ENCODE measurements at regions of chr6 and their contacts with region 1.

Region 1: GRCh38 chr6:129748212-129748900 is 38.4 kb upstream of the ARHGAP18 start:
- DNase-seq: peak in 8 of 9 donors; percentile 35 to 61 (median 42)
- ATAC-seq: peak; percentile 85
- H3K4me3 ChIP-seq: peak overlapping the region; percentile 43
- H3K4me3 Mint-ChIP-seq: peak overlapping the region; percentile 31 to 86 (median 79)
- H3K27ac ChIP-seq: peak overlapping the region; percentile 69
- H3K27ac Mint-ChIP-seq: peak overlapping the region; percentile 82 to 97 (median 89)
- H3K4me1 ChIP-seq: peaks cover 44 to 49% of the 10 kb centered on the region in 2 donors
- H3K4me1 Mint-ChIP-seq: peaks cover 40 to 81% (median 71%) of the 10 kb centered on the region in 7 donors
- H3K27me3 ChIP-seq: no peaks in the 10 kb centered on the region
- H3K27me3 Mint-ChIP-seq: no peaks in the 10 kb centered on the region

Region 2: GRCh38 chr6:129490521-129491245 is 257.7 kb before region 1 on chr6:
- CTCF ChIA-PET with region 1: no interaction called
- POLR2A ChIA-PET with region 1: no interaction called
- intact Hi-C with region 1: loop called (anchors 2 kb)
- DNase-seq: peak in 8 of 9 donors; percentile 53 to 89 (median 72)
- ATAC-seq: peak; percentile 96
- H3K4me3 ChIP-seq: peak overlapping the region; percentile 38
- H3K4me3 Mint-ChIP-seq: peak overlapping the region; percentile 61 to 90 (median 76)
- H3K27ac ChIP-seq: peak overlapping the region; percentile 73
- H3K27ac Mint-ChIP-seq: peak overlapping the region; percentile 84 to 97 (median 94)
- H3K4me1 ChIP-seq: peaks cover 15 to 21% of the 10 kb centered on the region in 2 donors
- H3K4me1 Mint-ChIP-seq: peaks cover 11 to 46% (median 32%) of the 10 kb centered on the region in 7 donors
- H3K27me3 ChIP-seq: no peaks in the 10 kb centered on the region
- H3K27me3 Mint-ChIP-seq: no peaks in the 10 kb centered on the region

Region 3: GRCh38 chr6:129598244-129599187 is 149.8 kb before region 1 on chr6:
- CTCF ChIA-PET with region 1: interaction called, 13 read pairs
- POLR2A ChIA-PET with region 1: interaction called, 9 read pairs
- intact Hi-C with region 1: no loop called
- DNase-seq: peak in 7 of 9 donors; percentile 37 to 79 (median 70)
- ATAC-seq: peak; percentile 95
- H3K4me3 ChIP-seq: no peak overlapping the region
- H3K4me3 Mint-ChIP-seq: no peak overlapping the region
- H3K27ac ChIP-seq: no peak overlapping the region
- H3K27ac Mint-ChIP-seq: no peak overlapping the region
- H3K4me1 ChIP-seq: no peaks in the 10 kb centered on the region
- H3K4me1 Mint-ChIP-seq: peaks cover 0 to 2% (median 0%) of the 10 kb centered on the region in 7 donors
- H3K27me3 ChIP-seq: no peaks in the 10 kb centered on the region
- H3K27me3 Mint-ChIP-seq: peaks cover 0 to 3% (median 0%) of the 10 kb centered on the region in 5 donors

Region 4: DNA sequence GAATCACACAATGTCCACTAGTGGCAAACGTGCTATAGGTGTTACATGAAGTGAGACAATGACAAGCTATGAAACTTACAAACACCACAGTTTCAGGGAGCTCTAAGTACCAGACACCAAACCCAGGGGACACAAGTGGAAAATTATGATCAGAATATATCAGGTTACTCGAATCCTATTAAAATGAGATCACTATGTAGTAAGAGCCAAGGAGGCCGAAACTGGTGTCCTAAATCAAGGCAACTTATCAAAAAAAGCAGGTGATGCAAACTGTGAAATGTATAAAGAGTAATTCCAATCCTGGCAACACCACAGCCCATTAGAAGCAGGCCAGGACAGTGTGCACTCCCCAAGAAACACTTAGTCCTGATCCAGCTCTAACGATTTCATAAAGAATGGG is 138.7 kb before region 1 on chr6:
- CTCF ChIA-PET with region 1: no interaction called
- POLR2A ChIA-PET with region 1: no interaction called
- intact Hi-C with region 1: no loop called
- DNase-seq: no peak
- ATAC-seq: no peak
- H3K4me3 ChIP-seq: no peak overlapping the region
- H3K4me3 Mint-ChIP-seq: no peak overlapping the region
- H3K27ac ChIP-seq: no peak overlapping the region
- H3K27ac Mint-ChIP-seq: peak overlapping the region in 1 of 9 donors; percentile 12
- H3K4me1 ChIP-seq: no peaks in the 10 kb centered on the region
- H3K4me1 Mint-ChIP-seq: no peaks in the 10 kb centered on the region
- H3K27me3 ChIP-seq: no peaks in the 10 kb centered on the region
- H3K27me3 Mint-ChIP-seq: no peaks in the 10 kb centered on the region

Region 5: GRCh38 chr6:129709769-129710449 is 38.4 kb before region 1 on chr6 and contains the start of gene ARHGAP18:
- CTCF ChIA-PET with region 1: no interaction called
- POLR2A ChIA-PET with region 1: no interaction called
- intact Hi-C with region 1: loop called in 1 of 2 experiments (anchors 2 kb)
- DNase-seq: peak; percentile 40 to 69 (median 49)
- ATAC-seq: peak; percentile 95
- H3K4me3 ChIP-seq: peak within 1 kb of the TSS; percentile 66
- H3K4me3 Mint-ChIP-seq: peak within 1 kb of the TSS; percentile 90 to 99 (median 94)
- H3K27ac ChIP-seq: peak within 1 kb of the TSS; percentile 37
- H3K27ac Mint-ChIP-seq: peak within 1 kb of the TSS; percentile 53 to 93 (median 83)
- H3K4me1 ChIP-seq: peaks cover 0 to 8% of the 10 kb centered on the region in 2 donors
- H3K4me1 Mint-ChIP-seq: peaks cover 21 to 43% (median 30%) of the 10 kb centered on the region in 7 donors
- H3K27me3 ChIP-seq: no peaks in the 10 kb centered on the region
- H3K27me3 Mint-ChIP-seq: peaks cover 0 to 2% (median 0%) of the 10 kb centered on the region in 5 donors
- total RNA-seq, gene ARHGAP18: 1.1 to 9.4 (median 2.0) TPM

Region 6: GRCh38 chr6:129766959-129767728 is 18.8 kb after region 1 on chr6:
- CTCF ChIA-PET with region 1: interaction called, 3 read pairs
- POLR2A ChIA-PET with region 1: interaction called, 3 read pairs
- intact Hi-C with region 1: loop called in 1 of 2 experiments (anchors 1 kb)
- DNase-seq: peak; percentile 11 to 72 (median 51)
- ATAC-seq: peak; percentile 88
- H3K4me3 ChIP-seq: peak overlapping the region; percentile 65
- H3K4me3 Mint-ChIP-seq: peak overlapping the region; percentile 73 to 96 (median 86)
- H3K27ac ChIP-seq: no peak overlapping the region
- H3K27ac Mint-ChIP-seq: peak overlapping the region in 6 of 9 donors; percentile 5 to 65 (median 22)
- H3K4me1 ChIP-seq: peaks cover 7 to 8% of the 10 kb centered on the region in 2 donors
- H3K4me1 Mint-ChIP-seq: peaks cover 11 to 39% (median 13%) of the 10 kb centered on the region in 7 donors
- H3K27me3 ChIP-seq: peaks cover 0 to 4% of the 10 kb centered on the region in 2 donors
- H3K27me3 Mint-ChIP-seq: peaks cover 3 to 81% (median 29%) of the 10 kb centered on the region in 5 donors

Region 7: GRCh38 chr6:130215526-130215925 is 467.2 kb after region 1 on chr6:
- CTCF ChIA-PET with region 1: no interaction called
- POLR2A ChIA-PET with region 1: no interaction called
- intact Hi-C with region 1: loop called in 1 of 2 experiments (anchors 10 kb)
- DNase-seq: peak in 8 of 9 donors; percentile 31 to 79 (median 70)
- ATAC-seq: peak; percentile 96
- H3K4me3 ChIP-seq: peak overlapping the region; percentile 63
- H3K4me3 Mint-ChIP-seq: peak overlapping the region; percentile 74 to 98 (median 90)
- H3K27ac ChIP-seq: peak overlapping the region; percentile 54
- H3K27ac Mint-ChIP-seq: peak overlapping the region; percentile 82 to 92 (median 86)
- H3K4me1 ChIP-seq: peaks cover 29 to 35% of the 10 kb centered on the region in 2 donors
- H3K4me1 Mint-ChIP-seq: peaks cover 21 to 81% (median 69%) of the 10 kb centered on the region in 7 donors
- H3K27me3 ChIP-seq: no peaks in the 10 kb centered on the region
- H3K27me3 Mint-ChIP-seq: no peaks in the 10 kb centered on the region